IMR-90 (cell line): ENCODE measurements at regions of chr1 and their contacts with region 1.

Region 1: GRCh38 chr1:192766009-192766625 is 42.7 kb upstream of the RGS2 start:
- DNase-seq: peak; percentile 37
- ATAC-seq: peak; percentile 54
- H3K4me3 ChIP-seq: no peak overlapping the region
- H3K27ac ChIP-seq: peak overlapping the region; percentile 44; the same call in 1 of the 2 replicates
- H3K4me1 ChIP-seq: peaks cover 18% of the 10 kb centered on the region
- H3K27me3 ChIP-seq: no peaks in the 10 kb centered on the region
- CTCF ChIP-seq: no peak
- POLR2A ChIP-seq: no peak
- RAD21 ChIP-seq: no peak

Region 2: GRCh38 chr1:192462616-192463015 is 303.5 kb before region 1 on chr1:
- CTCF ChIA-PET with region 1: no interaction called
- POLR2A ChIA-PET with region 1: no interaction called
- dilution Hi-C with region 1: no loop called
- in situ Hi-C with region 1: no loop called
- intact Hi-C with region 1: no loop called
- DNase-seq: no peak
- ATAC-seq: no peak
- H3K4me3 ChIP-seq: no peak overlapping the region
- H3K27ac ChIP-seq: no peak overlapping the region
- H3K4me1 ChIP-seq: no peaks in the 10 kb centered on the region
- H3K27me3 ChIP-seq: no peaks in the 10 kb centered on the region
- CTCF ChIP-seq: no peak
- POLR2A ChIP-seq: no peak
- RAD21 ChIP-seq: no peak

Region 3: GRCh38 chr1:192724670-192725069 is 41.4 kb before region 1 on chr1:
- CTCF ChIA-PET with region 1: no interaction called
- POLR2A ChIA-PET with region 1: no interaction called
- dilution Hi-C with region 1: no loop called
- in situ Hi-C with region 1: no loop called
- intact Hi-C with region 1: no loop called
- DNase-seq: peak; percentile 68
- ATAC-seq: peak; percentile 57
- H3K4me3 ChIP-seq: no peak overlapping the region
- H3K27ac ChIP-seq: no peak overlapping the region
- H3K4me1 ChIP-seq: no peaks in the 10 kb centered on the region
- H3K27me3 ChIP-seq: no peaks in the 10 kb centered on the region
- CTCF ChIP-seq: no peak
- POLR2A ChIP-seq: no peak
- RAD21 ChIP-seq: no peak

Region 4: DNA sequence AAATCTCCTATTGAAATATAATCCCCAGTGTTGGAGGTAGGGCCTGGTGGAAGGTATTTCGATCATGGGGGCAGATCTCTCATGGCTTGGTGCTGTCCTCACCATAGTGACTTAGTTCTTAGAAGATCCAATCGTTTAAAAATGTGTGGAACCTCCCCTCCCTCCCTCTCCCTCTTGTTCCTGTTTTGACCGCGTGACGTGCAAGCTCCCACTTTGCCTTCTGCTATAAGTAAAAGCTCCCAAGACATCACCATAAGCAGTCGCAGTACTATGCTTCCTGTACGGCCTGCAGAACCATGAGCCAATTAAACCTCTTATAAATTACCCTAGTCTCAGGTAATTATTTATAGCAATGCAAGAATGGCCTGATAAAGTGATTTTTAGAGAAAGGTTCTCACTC is 31.8 kb after region 1 on chr1:
- CTCF ChIA-PET with region 1: no interaction called
- POLR2A ChIA-PET with region 1: no interaction called
- dilution Hi-C with region 1: no loop called
- in situ Hi-C with region 1: no loop called
- intact Hi-C with region 1: loop called (anchors 5 kb)
- DNase-seq: no peak
- ATAC-seq: no peak
- H3K4me3 ChIP-seq: no peak overlapping the region
- H3K27ac ChIP-seq: no peak overlapping the region
- H3K4me1 ChIP-seq: peaks cover 2% of the 10 kb centered on the region
- H3K27me3 ChIP-seq: no peaks in the 10 kb centered on the region
- CTCF ChIP-seq: no peak
- POLR2A ChIP-seq: no peak
- RAD21 ChIP-seq: no peak

Region 5: DNA sequence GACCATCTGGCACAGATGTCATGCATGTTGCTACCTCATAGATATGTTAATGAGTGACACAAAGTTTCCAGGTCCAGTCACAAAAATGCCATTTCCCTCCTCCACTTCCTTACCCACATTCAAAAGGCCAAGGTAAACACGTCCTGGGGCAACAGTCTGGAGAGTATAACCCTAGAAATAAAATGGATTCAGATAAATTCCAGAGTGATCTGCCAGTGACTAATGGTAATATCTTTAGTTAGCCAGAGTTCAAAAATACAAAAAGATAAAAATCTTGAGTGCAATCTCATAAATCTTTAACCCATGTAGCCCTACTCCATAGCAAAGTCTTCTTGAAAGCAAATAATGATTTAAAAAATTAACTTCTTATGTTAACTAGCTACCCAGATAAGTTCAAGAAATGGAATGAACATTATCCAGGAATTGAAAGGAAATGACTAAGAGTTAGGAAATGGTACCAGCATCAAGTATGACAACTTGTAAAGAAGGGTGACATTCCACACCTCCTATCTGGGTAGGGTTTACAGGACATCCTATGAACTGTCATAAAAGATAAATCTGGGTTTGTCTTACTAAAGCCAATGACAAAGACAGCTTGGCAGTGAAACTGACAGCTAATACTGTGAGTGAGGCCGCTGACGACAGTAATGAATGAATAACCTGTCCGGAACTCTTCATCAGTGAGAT is 60.8 kb after region 1 on chr1:
- CTCF ChIA-PET with region 1: no interaction called
- POLR2A ChIA-PET with region 1: no interaction called
- dilution Hi-C with region 1: no loop called
- in situ Hi-C with region 1: no loop called
- intact Hi-C with region 1: no loop called
- DNase-seq: no peak
- ATAC-seq: no peak
- H3K4me3 ChIP-seq: no peak overlapping the region
- H3K27ac ChIP-seq: no peak overlapping the region
- H3K4me1 ChIP-seq: peaks cover 3% of the 10 kb centered on the region; the same call in 1 of the 2 replicates
- H3K27me3 ChIP-seq: no peaks in the 10 kb centered on the region
- CTCF ChIP-seq: no peak
- POLR2A ChIP-seq: no peak
- RAD21 ChIP-seq: no peak